H1 (cell line): ENCODE measurements at regions of chr15 and their contacts with region 1.

Region 1: DNA sequence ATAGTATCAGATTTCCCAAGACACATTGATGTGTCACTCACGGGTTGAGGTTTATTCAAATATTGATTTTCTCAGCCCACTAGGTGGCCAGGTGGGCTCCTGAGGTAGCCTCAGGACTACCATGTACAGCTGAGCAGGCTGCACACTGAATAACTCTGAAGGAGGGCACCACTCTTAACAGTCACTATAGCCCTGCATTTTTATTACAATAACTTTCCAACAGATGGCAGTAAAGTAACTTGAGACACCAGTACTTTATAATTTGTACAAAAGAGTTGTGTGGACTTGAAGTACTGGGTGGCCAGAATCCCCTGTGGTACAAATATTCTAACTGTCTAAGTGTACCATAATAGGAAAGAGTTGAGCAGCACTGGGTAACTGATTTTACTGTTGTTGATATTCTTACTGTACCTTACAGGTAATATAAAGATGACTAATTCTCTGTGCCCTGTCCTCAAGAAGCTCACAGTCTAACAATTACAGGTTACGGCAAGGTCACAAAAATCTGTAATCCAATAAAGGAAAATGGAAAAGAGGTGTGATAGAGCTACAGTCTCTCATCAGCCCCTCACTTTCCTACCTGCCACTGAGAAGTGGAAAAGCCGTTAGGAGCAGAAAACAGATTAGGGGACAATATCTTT is 76.0 kb downstream of the ETFA start:
- DNase-seq: no peak
- H3K4me3 ChIP-seq: no peak overlapping the region
- H3K27ac ChIP-seq: no peak overlapping the region
- H3K4me1 ChIP-seq: peaks cover 0 to 8% (median 5%) of the 10 kb centered on the region in 4 experiments; a peak in 6 of 7 replicates
- H3K27me3 ChIP-seq: no peaks in the 10 kb centered on the region
- CTCF ChIP-seq: peak in 2 of 3 experiments; percentile 22 to 29; a peak in 2 of 4 replicates
- EP300 ChIP-seq: no peak
- POLR2A ChIP-seq: no peak
- RAD21 ChIP-seq: peak; percentile 56 to 59

Region 2: DNA sequence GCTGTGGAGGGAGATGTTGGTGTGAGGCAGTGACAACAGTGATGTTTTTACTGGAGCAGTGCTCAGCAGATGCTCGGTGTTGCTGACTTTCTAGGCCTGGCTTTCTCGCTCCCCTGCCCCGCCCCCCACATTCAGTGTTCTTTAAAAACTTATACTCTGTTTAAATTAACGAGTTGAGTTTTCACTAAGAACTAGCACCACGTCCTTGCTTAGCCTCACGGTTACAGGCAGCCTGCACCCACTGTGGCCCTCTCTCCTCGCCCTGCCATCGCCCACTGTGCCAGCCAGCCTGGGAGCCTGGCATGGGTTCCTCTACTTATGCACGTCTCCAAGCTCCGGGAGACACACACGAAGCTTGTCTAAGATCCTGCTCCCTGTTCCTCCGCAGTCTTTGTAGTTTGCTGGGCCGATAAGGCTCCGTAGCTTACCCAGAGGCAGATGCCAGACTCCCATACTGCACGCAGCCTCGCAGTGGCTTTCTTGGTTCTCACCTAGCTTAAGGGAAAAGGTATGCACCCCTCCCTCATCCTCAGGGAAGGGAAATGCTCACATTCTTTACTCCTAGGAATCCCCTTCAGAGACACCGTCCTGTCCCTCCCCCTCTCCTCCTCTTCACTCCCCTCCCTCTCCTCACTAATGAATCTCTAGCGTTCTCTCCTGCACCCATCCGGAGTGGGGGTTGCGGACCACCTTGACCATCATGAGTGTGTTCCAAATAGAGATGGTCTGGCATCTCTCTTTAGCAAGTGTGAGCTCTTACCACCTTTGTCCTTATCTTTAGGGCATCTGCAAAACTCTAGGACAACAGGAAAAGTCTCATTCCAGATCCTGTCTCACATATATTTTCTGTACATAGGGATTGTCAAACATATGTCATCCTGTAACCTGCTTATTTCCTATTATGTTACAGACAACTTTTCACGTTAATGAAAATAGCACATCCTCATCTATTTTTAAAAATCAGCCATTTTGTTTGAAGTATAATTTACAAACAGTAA is 119.1 kb before region 1 on chr15:
- CTCF ChIA-PET with region 1: no interaction called
- POLR2A ChIA-PET with region 1: no interaction called
- DNase-seq: peak in 1 of 2 experiments; percentile 54
- H3K4me3 ChIP-seq: peak overlapping the region in 1 of 4 experiments; percentile 21; a peak in 2 of 8 replicates
- H3K27ac ChIP-seq: no peak overlapping the region
- H3K4me1 ChIP-seq: peaks cover 0 to 10% (median 7%) of the 10 kb centered on the region in 4 experiments; a peak in 6 of 7 replicates
- H3K27me3 ChIP-seq: no peaks in the 10 kb centered on the region
- CTCF ChIP-seq: peak in 1 of 3 experiments; percentile 15; a peak in 1 of 4 replicates
- EP300 ChIP-seq: no peak
- POLR2A ChIP-seq: no peak
- RAD21 ChIP-seq: peak; percentile 9 to 37; a peak in 1 of 4 replicates

Region 3: DNA sequence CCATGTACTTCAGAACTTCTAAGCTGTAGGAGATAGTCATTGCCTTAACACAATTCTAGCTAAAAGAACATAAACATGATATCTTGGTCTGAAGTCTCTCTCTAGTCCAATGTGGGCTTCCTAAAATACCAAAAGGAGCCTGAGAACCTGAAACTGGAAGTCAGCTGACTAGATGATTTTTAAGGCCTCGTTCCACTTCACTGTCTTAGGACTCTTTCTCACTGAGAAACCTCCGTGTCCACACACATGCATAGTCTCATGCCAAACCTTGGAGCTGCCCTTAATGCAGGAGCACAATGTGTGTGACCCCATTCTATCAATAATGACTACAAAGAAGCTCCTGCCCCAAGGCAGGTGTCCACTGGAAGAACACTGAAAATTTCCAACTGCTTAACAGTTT is 11.8 kb before region 1 on chr15:
- CTCF ChIA-PET with region 1: interaction called, 11 read pairs
- POLR2A ChIA-PET with region 1: interaction called, 3 read pairs
- DNase-seq: no peak
- H3K4me3 ChIP-seq: no peak overlapping the region
- H3K27ac ChIP-seq: no peak overlapping the region
- H3K4me1 ChIP-seq: no peaks in the 10 kb centered on the region
- H3K27me3 ChIP-seq: no peaks in the 10 kb centered on the region
- CTCF ChIP-seq: no peak
- EP300 ChIP-seq: no peak
- POLR2A ChIP-seq: no peak
- RAD21 ChIP-seq: no peak

Region 4: GRCh38 chr15:76330080-76330680 is 94.9 kb after region 1 on chr15:
- CTCF ChIA-PET with region 1: interaction called, 55 read pairs
- POLR2A ChIA-PET with region 1: no interaction called
- DNase-seq: peak in 1 of 2 experiments; percentile 66
- H3K4me3 ChIP-seq: no peak overlapping the region
- H3K27ac ChIP-seq: no peak overlapping the region
- H3K4me1 ChIP-seq: peaks cover 0 to 5% (median 3%) of the 10 kb centered on the region in 4 experiments; a peak in 6 of 7 replicates
- H3K27me3 ChIP-seq: peaks cover 0 to 13% (median 12%) of the 10 kb centered on the region in 4 experiments; a peak in 6 of 7 replicates
- CTCF ChIP-seq: peak; percentile 66 to 76 (median 72)
- EP300 ChIP-seq: no peak
- POLR2A ChIP-seq: no peak
- RAD21 ChIP-seq: peak; percentile 69 to 76